Activated CD4-positive, alpha-beta T cell treated with anti-CD3 and anti-CD28 coated beads for 36 hours (primary cell): ENCODE measurements at regions of chr1 and their contacts with region 1.

Region 1: DNA sequence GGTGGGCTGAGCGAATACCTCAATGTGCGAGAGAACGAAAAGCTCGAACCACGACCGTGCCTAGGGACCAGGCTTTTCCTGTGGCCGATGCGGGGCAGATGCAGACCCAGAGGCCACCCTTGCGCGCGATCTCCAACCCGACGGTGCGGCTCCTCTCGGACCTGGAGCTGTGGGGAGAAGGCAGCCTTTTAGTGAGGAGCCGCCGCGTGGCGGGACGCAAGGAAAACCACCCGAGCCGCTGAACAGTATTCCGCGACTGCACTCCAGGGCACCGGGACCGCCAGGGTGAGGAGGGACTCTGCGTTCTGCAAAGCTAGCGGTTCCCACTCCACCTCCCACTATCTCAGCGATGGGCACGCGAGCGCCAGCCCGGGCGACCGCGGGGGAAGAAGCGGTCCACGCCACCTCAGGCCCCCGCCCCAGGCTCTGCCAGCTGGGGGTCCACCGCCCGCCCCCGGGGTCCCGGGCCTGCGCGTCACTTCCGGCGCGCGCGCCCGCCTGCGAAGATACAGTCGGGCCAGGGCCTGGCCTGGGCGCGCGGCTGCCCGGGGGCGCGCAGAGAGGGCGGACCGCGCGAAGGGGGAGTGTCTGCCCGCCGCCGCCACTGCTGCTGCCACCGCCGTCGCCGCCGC is 66.5 kb upstream of the PRKACB start:
- DNase-seq: peak; percentile 85
- ATAC-seq: peak; percentile 94
- H3K4me3 Mint-ChIP-seq: peak overlapping the region; percentile 79
- H3K27ac Mint-ChIP-seq: peak overlapping the region; percentile 58
- H3K4me1 Mint-ChIP-seq: peaks cover 6% of the 10 kb centered on the region
- H3K27me3 Mint-ChIP-seq: peaks cover 2% of the 10 kb centered on the region

Region 2: GRCh38 chr1:84006591-84006990 is 71.0 kb before region 1 on chr1:
- CTCF ChIA-PET with region 1: no interaction called
- POLR2A ChIA-PET with region 1: no interaction called
- intact Hi-C with region 1: loop called in 1 of 2 experiments (anchors 5 kb)
- DNase-seq: peak; percentile 12
- ATAC-seq: no peak
- H3K4me3 Mint-ChIP-seq: no peak overlapping the region
- H3K27ac Mint-ChIP-seq: no peak overlapping the region
- H3K4me1 Mint-ChIP-seq: peaks cover 3% of the 10 kb centered on the region
- H3K27me3 Mint-ChIP-seq: peaks cover 29% of the 10 kb centered on the region

Region 3: DNA sequence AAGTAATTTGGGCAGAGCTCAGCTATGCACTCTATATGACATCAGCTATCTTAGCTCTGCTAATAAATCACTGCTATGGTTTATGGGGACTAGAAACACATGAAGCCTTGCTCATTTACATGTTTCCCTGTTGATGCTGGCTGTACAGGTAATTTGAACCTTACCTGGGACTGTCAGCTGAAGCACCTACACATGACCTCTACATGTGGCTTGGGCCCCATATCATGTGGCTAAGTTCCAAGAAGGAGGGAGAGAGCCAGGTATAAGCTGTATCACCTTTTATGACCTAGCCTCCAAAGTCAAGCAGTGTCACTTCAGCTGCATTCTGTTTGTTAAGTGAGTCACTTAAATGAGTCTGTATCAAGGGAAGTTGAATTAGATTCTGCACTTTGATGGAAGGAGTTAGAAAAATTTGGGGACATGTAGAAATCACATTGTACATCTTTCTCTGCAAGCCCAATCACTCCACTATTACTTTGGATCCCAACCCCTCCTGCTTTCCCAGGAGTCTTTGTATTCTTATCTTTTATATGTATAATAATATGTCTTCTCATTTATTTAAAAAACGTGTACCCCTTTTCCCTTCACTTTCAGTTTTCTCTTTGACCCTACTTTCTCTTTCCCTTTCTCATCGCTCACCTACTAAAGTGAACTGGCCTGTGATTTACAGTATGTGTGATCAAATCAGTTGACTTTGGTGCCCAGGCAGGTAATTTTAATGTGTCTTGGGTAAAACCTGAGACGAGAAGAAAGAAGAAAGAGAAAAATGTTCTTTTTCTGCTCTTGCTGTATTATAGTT is 13.1 kb after region 1 on chr1:
- CTCF ChIA-PET with region 1: interaction called, 7 read pairs
- POLR2A ChIA-PET with region 1: no interaction called
- intact Hi-C with region 1: loop called in 1 of 2 experiments (anchors 2 kb)
- DNase-seq: peak; percentile 10
- ATAC-seq: peak; percentile 52
- H3K4me3 Mint-ChIP-seq: peak overlapping the region; percentile 50
- H3K27ac Mint-ChIP-seq: peak overlapping the region; percentile 75
- H3K4me1 Mint-ChIP-seq: peaks cover 32% of the 10 kb centered on the region
- H3K27me3 Mint-ChIP-seq: no peaks in the 10 kb centered on the region

Region 4: DNA sequence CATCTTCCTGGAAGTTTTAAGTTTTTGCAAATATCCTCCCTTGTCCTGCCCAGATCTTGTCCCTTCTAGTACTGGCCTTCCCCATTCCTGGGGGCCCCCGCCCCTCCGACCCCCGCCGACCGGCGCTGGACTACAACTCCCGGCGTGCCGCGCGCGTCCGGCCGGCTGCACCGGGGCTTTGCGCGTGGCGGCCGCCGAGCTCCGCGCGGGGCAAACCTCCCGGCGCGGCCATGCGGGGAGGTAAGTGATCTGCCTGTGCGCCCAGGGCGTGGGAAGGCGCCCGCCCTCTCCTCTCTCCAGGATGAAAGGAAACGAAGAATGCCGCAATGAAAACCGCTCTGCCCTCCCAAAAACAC is 220.7 kb after region 1 on chr1:
- CTCF ChIA-PET with region 1: no interaction called
- POLR2A ChIA-PET with region 1: no interaction called
- intact Hi-C with region 1: loop called in 1 of 2 experiments (anchors 5 kb)
- DNase-seq: peak; percentile 71
- ATAC-seq: peak; percentile 79
- H3K4me3 Mint-ChIP-seq: peak overlapping the region; percentile 78
- H3K27ac Mint-ChIP-seq: peak overlapping the region; percentile 71
- H3K4me1 Mint-ChIP-seq: peaks cover 34% of the 10 kb centered on the region
- H3K27me3 Mint-ChIP-seq: peaks cover 6% of the 10 kb centered on the region

Region 5: DNA sequence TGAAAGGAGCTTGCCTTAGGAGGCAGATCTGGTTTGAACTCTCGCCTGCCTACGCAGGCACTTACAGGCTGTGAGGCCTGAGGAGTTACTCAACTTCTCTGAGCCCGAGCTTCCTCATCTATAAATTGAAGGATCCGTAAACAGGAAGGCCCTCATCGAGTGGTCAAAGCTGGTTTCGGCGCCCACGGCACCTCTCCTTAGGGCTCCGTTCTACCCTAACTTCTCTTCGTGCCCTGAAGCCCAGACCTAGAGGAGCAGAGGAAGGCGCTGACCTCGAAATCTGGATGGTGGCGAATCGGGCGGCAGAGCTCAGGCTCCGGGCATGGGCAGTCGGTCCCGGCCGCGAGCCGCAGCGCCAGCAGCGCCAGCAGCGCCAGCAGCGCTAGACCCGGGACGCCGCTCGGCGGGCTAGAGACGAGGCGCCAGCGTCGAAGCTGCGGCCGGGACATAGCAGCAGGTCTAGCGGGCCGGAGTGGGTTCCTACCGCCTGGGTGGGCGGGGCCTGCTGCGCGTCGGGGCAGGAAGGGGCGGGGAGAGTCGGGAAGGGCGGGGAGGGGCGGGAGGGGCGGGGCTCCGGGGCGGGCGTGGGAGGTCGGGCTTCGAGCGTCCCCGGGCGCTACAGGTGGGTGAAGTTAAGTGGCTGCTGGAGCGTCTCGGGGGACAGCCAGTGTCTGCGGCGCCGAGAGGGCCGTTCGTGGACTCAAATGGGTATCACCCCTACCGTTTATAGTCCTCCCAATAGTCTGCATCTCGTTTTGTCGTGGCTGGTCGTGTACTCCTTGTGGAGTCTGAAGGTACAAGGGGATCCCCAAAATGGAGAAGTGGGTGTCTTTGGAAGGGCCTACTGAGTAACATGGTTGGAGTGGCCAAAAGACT is 496.6 kb after region 1 on chr1 and contains the start of gene CTBS:
- CTCF ChIA-PET with region 1: no interaction called
- POLR2A ChIA-PET with region 1: no interaction called
- intact Hi-C with region 1: loop called in 1 of 2 experiments (anchors 5 kb)
- DNase-seq: peak; percentile 94
- ATAC-seq: peak; percentile 85
- H3K4me3 Mint-ChIP-seq: peak within 1 kb of the TSS; percentile 97
- H3K27ac Mint-ChIP-seq: peak within 1 kb of the TSS; percentile 99
- H3K4me1 Mint-ChIP-seq: peaks cover 45% of the 10 kb centered on the region
- H3K27me3 Mint-ChIP-seq: no peaks in the 10 kb centered on the region
- total RNA-seq, gene CTBS: 13.5 to 17.3 TPM